HCT116 (cell line): ENCODE measurements at regions of chrX and their contacts with region 1.

Region 1: DNA sequence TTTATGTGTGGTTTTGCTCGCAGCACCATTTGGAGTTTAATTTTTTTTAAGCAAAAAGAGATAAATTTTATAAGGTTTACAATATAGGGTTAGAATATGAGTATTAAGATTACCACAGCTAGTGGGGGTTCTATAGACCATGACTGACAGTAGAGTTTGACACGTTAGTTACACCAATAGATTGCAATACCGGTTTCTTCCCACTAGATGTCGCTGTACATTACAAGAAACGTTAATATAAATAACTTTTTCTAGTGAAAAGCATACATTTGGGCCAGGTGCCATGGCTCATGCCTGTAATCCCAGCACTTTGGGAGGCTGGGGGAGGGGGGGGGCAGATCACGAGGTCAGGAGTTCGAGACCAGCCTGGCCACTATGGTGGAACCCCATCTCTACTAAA is 433.6 kb downstream of the MAGEB5 start:
- DNase-seq: peak; percentile 40
- ATAC-seq: peak; percentile 50
- H3K4me3 ChIP-seq: no peak overlapping the region
- H3K27ac ChIP-seq: no peak overlapping the region
- H3K4me1 ChIP-seq: no peaks in the 10 kb centered on the region
- H3K27me3 ChIP-seq: no peaks in the 10 kb centered on the region
- CTCF ChIP-seq: peak; percentile 9 to 53 (median 43); a peak in 4 of 6 replicates
- POLR2A ChIP-seq: no peak
- RAD21 ChIP-seq: peak; percentile 29; the same call in 1 of the 2 replicates

Region 2: DNA sequence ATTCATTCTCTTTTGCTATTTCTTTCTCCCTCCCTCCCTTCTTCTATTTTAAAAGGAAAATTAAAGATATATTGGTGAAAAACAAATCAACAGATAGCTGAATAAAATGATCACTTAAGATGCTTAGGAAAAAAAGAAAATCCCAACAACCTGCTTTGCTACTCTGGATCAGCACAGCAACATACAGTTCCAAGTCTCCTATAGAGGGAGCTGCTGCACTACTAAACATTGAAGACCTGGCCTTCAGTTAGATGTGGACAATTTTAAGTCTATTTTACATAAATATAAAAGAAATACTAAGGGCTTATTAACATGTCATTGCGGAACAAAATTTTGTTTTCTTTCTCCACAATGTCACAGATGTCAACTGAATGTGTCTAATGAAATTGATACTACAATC is 207.2 kb before region 1 on chrX:
- CTCF ChIA-PET with region 1: no interaction called
- POLR2A ChIA-PET with region 1: no interaction called
- RAD21 ChIA-PET with region 1: no interaction called
- intact Hi-C with region 1: loop called (anchors 10 kb)
- DNase-seq: peak; percentile 2
- ATAC-seq: no peak
- H3K4me3 ChIP-seq: no peak overlapping the region
- H3K27ac ChIP-seq: no peak overlapping the region
- H3K4me1 ChIP-seq: no peaks in the 10 kb centered on the region
- H3K27me3 ChIP-seq: no peaks in the 10 kb centered on the region
- CTCF ChIP-seq: peak in 2 of 3 experiments; percentile 44 to 46; a peak in 3 of 6 replicates
- POLR2A ChIP-seq: no peak
- RAD21 ChIP-seq: peak; percentile 40

Region 3: DNA sequence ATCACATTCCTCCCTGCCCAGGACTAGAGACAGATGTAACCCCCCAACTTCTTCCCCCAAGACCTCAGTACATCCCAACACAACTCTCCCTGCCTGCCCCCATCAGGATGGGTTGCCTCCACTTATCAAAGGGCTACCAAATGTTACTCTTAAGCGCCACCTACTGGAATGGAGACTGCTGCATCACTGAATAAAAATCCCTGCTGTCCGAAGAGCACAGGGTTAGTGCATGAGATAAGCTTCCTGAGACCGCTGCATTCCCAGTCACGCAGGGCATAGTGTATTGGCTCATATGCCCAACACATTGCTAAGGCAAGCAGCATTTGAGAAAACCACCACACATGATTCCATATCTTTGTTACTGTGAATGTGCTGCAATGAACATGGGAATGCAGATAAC is 269.1 kb after region 1 on chrX:
- CTCF ChIA-PET with region 1: no interaction called
- POLR2A ChIA-PET with region 1: no interaction called
- RAD21 ChIA-PET with region 1: no interaction called
- intact Hi-C with region 1: loop called (anchors 5 kb)
- DNase-seq: peak; percentile 12
- ATAC-seq: peak; percentile 90
- H3K4me3 ChIP-seq: no peak overlapping the region
- H3K27ac ChIP-seq: no peak overlapping the region
- H3K4me1 ChIP-seq: no peaks in the 10 kb centered on the region
- H3K27me3 ChIP-seq: no peaks in the 10 kb centered on the region
- CTCF ChIP-seq: peak; percentile 26 to 62 (median 52); a peak in 5 of 6 replicates
- POLR2A ChIP-seq: no peak
- RAD21 ChIP-seq: peak; percentile 50

Region 4: GRCh38 chrX:27336466-27337091 is 687.0 kb after region 1 on chrX:
- CTCF ChIA-PET with region 1: no interaction called
- POLR2A ChIA-PET with region 1: no interaction called
- RAD21 ChIA-PET with region 1: no interaction called
- intact Hi-C with region 1: loop called (anchors 5 kb)
- DNase-seq: peak; percentile 3
- ATAC-seq: no peak
- H3K4me3 ChIP-seq: no peak overlapping the region
- H3K27ac ChIP-seq: no peak overlapping the region
- H3K4me1 ChIP-seq: no peaks in the 10 kb centered on the region
- H3K27me3 ChIP-seq: no peaks in the 10 kb centered on the region
- CTCF ChIP-seq: peak; percentile 23 to 74 (median 66); a peak in 5 of 6 replicates
- POLR2A ChIP-seq: no peak
- RAD21 ChIP-seq: peak; percentile 37

Region 5: DNA sequence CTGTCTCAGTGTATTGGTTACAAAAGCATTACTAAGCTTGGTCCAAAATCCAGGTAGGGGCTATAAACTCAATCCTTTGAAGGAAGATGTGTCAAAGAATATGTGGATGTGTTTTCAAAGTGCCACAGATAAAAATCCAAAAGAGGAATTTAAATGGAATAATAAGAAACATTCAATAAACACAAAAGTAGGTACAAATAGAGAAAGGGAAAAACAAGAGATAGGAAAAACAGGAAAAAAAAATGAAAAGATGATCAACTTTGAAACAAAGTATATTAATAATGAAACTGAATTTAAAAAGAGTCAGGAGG is 749.6 kb after region 1 on chrX:
- CTCF ChIA-PET with region 1: no interaction called
- POLR2A ChIA-PET with region 1: no interaction called
- RAD21 ChIA-PET with region 1: no interaction called
- intact Hi-C with region 1: loop called (anchors 5 kb)
- DNase-seq: no peak
- ATAC-seq: no peak
- H3K4me3 ChIP-seq: peak overlapping the region; percentile 57 to 66
- H3K27ac ChIP-seq: no peak overlapping the region
- H3K4me1 ChIP-seq: no peaks in the 10 kb centered on the region
- H3K27me3 ChIP-seq: no peaks in the 10 kb centered on the region
- CTCF ChIP-seq: no peak
- POLR2A ChIP-seq: no peak
- RAD21 ChIP-seq: no peak